CD8-positive, alpha-beta T cell (primary cell): ENCODE measurements at regions of chr5 and their contacts with region 1.

Region 1: GRCh38 chr5:160342403-160342941 is 28.0 kb downstream of the C1QTNF2 start:
- DNase-seq: no peak
- ATAC-seq: no peak
- H3K4me3 ChIP-seq: no peak overlapping the region
- H3K4me3 Mint-ChIP-seq: no peak overlapping the region
- H3K27ac ChIP-seq: no peak overlapping the region
- H3K27ac Mint-ChIP-seq: no peak overlapping the region
- H3K4me1 ChIP-seq: peaks cover 5% of the 10 kb centered on the region
- H3K4me1 Mint-ChIP-seq: no peaks in the 10 kb centered on the region
- H3K27me3 ChIP-seq: no peaks in the 10 kb centered on the region
- H3K27me3 Mint-ChIP-seq: no peaks in the 10 kb centered on the region
- CTCF ChIP-seq: no peak

Region 2: DNA sequence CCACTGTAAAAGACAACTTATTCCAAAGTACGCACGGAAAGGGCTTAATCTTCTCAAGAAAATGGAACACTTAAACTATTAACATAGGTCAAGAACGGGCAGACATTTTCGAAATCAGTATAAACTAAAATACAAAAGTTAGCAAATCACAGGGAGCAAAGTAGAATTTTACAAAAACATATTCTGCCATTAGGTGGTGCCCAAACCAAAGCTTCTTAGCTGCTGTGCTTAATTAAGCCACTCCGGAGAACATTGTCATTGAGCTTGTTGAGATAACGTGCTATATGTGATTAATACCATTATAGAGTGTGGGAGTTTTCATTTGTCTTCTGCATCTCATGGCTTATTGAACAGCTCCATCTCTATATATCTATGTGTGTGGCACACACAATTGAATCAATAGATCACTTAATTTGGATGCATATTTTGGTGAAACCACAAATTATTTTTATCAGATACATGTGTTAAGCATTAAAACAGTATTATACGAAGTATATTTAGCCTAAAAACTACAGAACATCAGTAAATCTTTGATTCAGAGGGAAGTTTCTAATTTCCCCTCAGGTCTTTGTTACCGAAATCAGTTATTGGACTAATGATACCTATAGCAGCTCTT is 1055.9 kb before region 1 on chr5:
- CTCF ChIA-PET with region 1: no interaction called
- POLR2A ChIA-PET with region 1: no interaction called
- intact Hi-C with region 1: loop called in 1 of 2 experiments (anchors 2 kb)
- DNase-seq: peak in 3 of 9 experiments; percentile 13 to 58 (median 44)
- ATAC-seq: no peak
- H3K4me3 ChIP-seq: no peak overlapping the region
- H3K4me3 Mint-ChIP-seq: no peak overlapping the region
- H3K27ac ChIP-seq: no peak overlapping the region
- H3K27ac Mint-ChIP-seq: no peak overlapping the region
- H3K4me1 ChIP-seq: no peaks in the 10 kb centered on the region
- H3K4me1 Mint-ChIP-seq: no peaks in the 10 kb centered on the region
- H3K27me3 ChIP-seq: no peaks in the 10 kb centered on the region
- H3K27me3 Mint-ChIP-seq: no peaks in the 10 kb centered on the region
- CTCF ChIP-seq: peak; percentile 53

Region 3: DNA sequence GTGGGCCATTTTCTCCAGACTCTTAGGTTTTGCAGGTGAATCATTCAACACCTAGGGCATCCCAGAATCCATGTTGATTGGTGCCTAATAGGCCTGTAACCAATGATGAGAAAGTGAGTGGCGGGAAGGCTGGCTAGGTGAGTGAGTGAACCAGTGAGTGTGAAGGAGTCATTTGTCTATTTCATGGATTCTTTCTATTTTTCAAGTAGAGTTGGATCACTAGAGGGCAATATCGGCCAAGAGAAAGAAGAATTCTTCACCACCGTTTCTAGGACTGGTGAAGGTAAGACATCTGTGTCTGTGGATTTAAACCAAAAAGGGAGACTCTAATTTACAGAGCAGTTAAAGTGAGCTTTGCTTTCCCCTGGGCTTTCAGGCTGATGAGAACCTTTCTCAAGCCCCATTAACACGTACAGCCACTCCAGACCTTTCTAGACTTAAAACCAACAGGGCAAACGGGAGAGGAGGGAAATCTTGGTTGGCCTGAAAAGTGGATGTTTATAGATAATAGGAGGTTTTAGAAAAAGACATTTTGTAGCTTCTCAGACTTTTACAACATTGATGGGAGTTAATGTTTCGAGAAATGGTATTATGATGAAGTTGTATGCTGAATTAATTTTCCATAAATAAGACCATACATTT is 897.9 kb before region 1 on chr5:
- CTCF ChIA-PET with region 1: interaction called, 3 read pairs
- POLR2A ChIA-PET with region 1: no interaction called
- intact Hi-C with region 1: loop called in 1 of 2 experiments (anchors 5 kb)
- DNase-seq: peak in 2 of 9 experiments; percentile 30 to 64
- ATAC-seq: no peak
- H3K4me3 ChIP-seq: no peak overlapping the region
- H3K4me3 Mint-ChIP-seq: no peak overlapping the region
- H3K27ac ChIP-seq: no peak overlapping the region
- H3K27ac Mint-ChIP-seq: no peak overlapping the region
- H3K4me1 ChIP-seq: no peaks in the 10 kb centered on the region
- H3K4me1 Mint-ChIP-seq: no peaks in the 10 kb centered on the region
- H3K27me3 ChIP-seq: no peaks in the 10 kb centered on the region
- H3K27me3 Mint-ChIP-seq: no peaks in the 10 kb centered on the region
- CTCF ChIP-seq: no peak

Region 4: DNA sequence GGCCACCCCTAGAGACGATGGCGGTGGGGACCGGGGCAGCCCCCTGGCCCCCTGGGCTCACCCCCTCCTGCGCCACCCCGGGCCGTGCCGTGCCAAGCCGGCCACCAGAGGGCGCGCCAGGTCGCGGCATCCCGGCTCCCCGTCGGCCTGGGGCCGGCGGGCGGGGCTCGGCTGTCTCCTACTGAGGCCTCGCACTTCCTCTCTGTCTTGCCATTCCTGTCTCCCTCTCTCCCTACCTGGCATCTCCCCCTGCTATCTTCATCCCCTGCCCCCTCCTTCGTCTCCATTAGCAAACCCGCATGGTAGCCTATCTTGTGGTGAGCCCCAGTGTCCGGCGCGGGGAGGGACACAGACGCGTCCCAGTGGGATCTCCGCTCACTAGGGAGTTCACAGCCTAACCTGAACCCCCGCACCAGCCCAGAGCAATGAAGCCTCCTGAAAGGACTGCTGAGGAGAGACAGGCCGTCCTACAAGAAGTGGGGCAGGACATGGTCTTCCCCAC is 143.0 kb before region 1 on chr5:
- CTCF ChIA-PET with region 1: interaction called, 34 read pairs
- POLR2A ChIA-PET with region 1: no interaction called
- intact Hi-C with region 1: loop called (anchors 1 kb)
- DNase-seq: peak; percentile 48 to 81 (median 68)
- ATAC-seq: peak; percentile 96
- H3K4me3 ChIP-seq: peak overlapping the region; percentile 50 to 51
- H3K4me3 Mint-ChIP-seq: peak overlapping the region; percentile 73
- H3K27ac ChIP-seq: no peak overlapping the region
- H3K27ac Mint-ChIP-seq: no peak overlapping the region
- H3K4me1 ChIP-seq: peaks cover 11% of the 10 kb centered on the region
- H3K4me1 Mint-ChIP-seq: peaks cover 8% of the 10 kb centered on the region
- H3K27me3 ChIP-seq: no peaks in the 10 kb centered on the region
- H3K27me3 Mint-ChIP-seq: peaks cover 16% of the 10 kb centered on the region
- CTCF ChIP-seq: peak; percentile 79

Region 5: GRCh38 chr5:160357861-160358411 is 15.5 kb after region 1 on chr5:
- CTCF ChIA-PET with region 1: interaction called, 26 read pairs
- POLR2A ChIA-PET with region 1: no interaction called
- intact Hi-C with region 1: no loop called
- DNase-seq: no peak
- ATAC-seq: no peak
- H3K4me3 ChIP-seq: no peak overlapping the region
- H3K4me3 Mint-ChIP-seq: no peak overlapping the region
- H3K27ac ChIP-seq: no peak overlapping the region
- H3K27ac Mint-ChIP-seq: no peak overlapping the region
- H3K4me1 ChIP-seq: no peaks in the 10 kb centered on the region
- H3K4me1 Mint-ChIP-seq: no peaks in the 10 kb centered on the region
- H3K27me3 ChIP-seq: no peaks in the 10 kb centered on the region
- H3K27me3 Mint-ChIP-seq: peaks cover 3% of the 10 kb centered on the region
- CTCF ChIP-seq: no peak